Heart right ventricle (tissue), 16 donors: ENCODE measurements at regions of chr15 and their contacts with region 1.

Region 1: GRCh38 chr15:47218295-47218694 is 499.0 kb upstream of the SEMA6D start:
- DNase-seq: no peak
- ATAC-seq: no peak
- H3K4me3 ChIP-seq: no peak overlapping the region
- H3K27ac ChIP-seq: no peak overlapping the region
- H3K4me1 ChIP-seq: no peaks in the 10 kb centered on the region
- H3K27me3 ChIP-seq: no peaks in the 10 kb centered on the region
- CTCF ChIP-seq: no peak

Region 2: GRCh38 chr15:47066392-47066791 is 151.9 kb before region 1 on chr15:
- intact Hi-C with region 1: no loop called
- DNase-seq: no peak
- ATAC-seq: no peak
- H3K4me3 ChIP-seq: no peak overlapping the region
- H3K27ac ChIP-seq: no peak overlapping the region
- H3K4me1 ChIP-seq: no peaks in the 10 kb centered on the region
- H3K27me3 ChIP-seq: no peaks in the 10 kb centered on the region
- CTCF ChIP-seq: no peak

Region 3: GRCh38 chr15:47374222-47374621 is 155.9 kb after region 1 on chr15:
- intact Hi-C with region 1: loop called in 1 of 10 experiments (anchors 10 kb)
- DNase-seq: no peak
- ATAC-seq: peak in 1 of 8 donors; percentile 33
- H3K4me3 ChIP-seq: no peak overlapping the region
- H3K27ac ChIP-seq: no peak overlapping the region
- H3K4me1 ChIP-seq: no peaks in the 10 kb centered on the region
- H3K27me3 ChIP-seq: no peaks in the 10 kb centered on the region
- CTCF ChIP-seq: peak in 7 of 9 donors; percentile 22 to 45 (median 27)